ENCODE measurements at regions of chr11 and their contacts with region 1.

Region 1: GRCh38 chr11:118689851-118690552 is 10.6 kb upstream of the TREH start:
- DNase-seq: peak; percentile 90
- H3K4me3 ChIP-seq: peak overlapping the region in 2 of 3 experiments; percentile 22 to 34
- H3K27ac ChIP-seq: peak overlapping the region; percentile 48
- H3K4me1 ChIP-seq: no peaks in the 10 kb centered on the region
- H3K27me3 ChIP-seq: peaks cover 0 to 3% of the 10 kb centered on the region in 2 experiments
- CTCF ChIP-seq: peak; percentile 91 to 97
- POLR2A ChIP-seq: peak; percentile 58

Region 2: GRCh38 chr11:118374729-118375128 is 315.3 kb before region 1 on chr11:
- CTCF ChIA-PET with region 1: no interaction called
- POLR2A ChIA-PET with region 1: no interaction called
- dilution Hi-C with region 1: no loop called
- intact Hi-C with region 1: no loop called
- DNase-seq: no peak
- H3K4me3 ChIP-seq: no peak overlapping the region
- H3K27ac ChIP-seq: no peak overlapping the region
- H3K4me1 ChIP-seq: no peaks in the 10 kb centered on the region
- H3K27me3 ChIP-seq: no peaks in the 10 kb centered on the region
- CTCF ChIP-seq: no peak
- POLR2A ChIP-seq: no peak

Region 3: DNA sequence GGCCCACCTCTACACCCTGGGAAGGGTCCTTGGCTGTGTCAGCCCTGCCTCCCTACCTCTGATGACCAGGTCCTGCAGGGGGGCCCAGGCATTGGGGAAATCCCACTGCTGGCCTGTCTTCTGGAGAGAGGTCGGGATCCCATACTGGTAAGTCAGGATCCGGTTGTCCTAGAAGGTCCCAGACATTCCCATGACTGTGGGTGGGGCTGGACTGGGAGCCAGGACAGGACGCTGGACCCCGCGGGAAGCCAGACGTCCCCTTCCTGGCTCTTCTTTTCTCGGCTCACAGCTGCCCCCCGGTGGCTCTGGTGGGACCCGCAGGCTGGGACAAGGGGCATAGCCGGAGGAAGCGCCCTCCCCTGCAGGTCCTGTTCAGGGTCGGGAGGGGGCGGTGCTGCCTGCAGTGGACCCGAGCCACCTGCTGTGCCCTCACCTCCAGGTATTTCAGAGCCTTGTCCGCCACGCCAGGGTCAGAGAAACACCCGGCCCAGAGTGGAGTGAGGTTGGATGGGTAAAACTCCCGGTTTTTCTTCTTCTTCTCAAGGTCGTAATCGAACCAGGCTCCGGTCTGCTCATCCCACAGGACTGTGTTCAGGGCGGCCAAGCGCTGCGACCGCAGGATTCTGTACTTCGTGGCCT is 30.6 kb before region 1 on chr11:
- CTCF ChIA-PET with region 1: interaction called, 4 read pairs
- POLR2A ChIA-PET with region 1: no interaction called
- dilution Hi-C with region 1: no loop called
- intact Hi-C with region 1: loop called (anchors 1 kb)
- DNase-seq: peak; percentile 86
- H3K4me3 ChIP-seq: no peak overlapping the region
- H3K27ac ChIP-seq: peak overlapping the region; percentile 18
- H3K4me1 ChIP-seq: peaks cover 6% of the 10 kb centered on the region
- H3K27me3 ChIP-seq: peaks cover 0 to 2% of the 10 kb centered on the region in 2 experiments
- CTCF ChIP-seq: peak; percentile 97 to 98
- POLR2A ChIP-seq: peak; percentile 65

Region 4: DNA sequence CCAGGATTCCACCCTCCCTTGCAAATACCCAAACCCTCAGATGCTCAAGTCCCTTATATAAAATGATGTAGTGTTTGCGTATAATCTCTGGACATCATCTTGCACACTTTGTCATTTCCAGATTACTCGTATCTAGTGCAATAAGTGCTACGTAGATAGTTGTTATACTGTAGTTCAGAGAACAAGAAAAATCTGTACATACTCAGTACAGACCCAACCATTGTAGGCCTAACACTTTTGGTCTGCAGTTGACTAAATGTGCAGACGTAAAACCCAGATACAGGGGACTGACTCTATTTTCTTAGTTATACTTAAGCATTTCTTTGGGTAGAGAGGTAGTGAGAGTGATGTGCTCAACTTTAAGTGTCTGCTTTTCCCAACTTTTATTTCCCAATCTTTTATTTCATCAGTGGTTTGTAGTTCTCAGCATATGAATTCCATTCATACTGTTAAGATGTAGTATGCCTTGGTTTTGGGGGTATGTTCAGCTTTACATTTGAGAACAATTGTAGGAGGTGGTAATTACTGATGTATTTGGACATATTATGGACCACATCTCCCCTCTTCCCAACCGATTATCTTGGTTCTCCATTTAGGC is 57.1 kb after region 1 on chr11:
- CTCF ChIA-PET with region 1: interaction called, 9 read pairs
- POLR2A ChIA-PET with region 1: no interaction called
- dilution Hi-C with region 1: no loop called
- intact Hi-C with region 1: loop called (anchors 5 kb)
- DNase-seq: no peak
- H3K4me3 ChIP-seq: no peak overlapping the region
- H3K27ac ChIP-seq: no peak overlapping the region
- H3K4me1 ChIP-seq: no peaks in the 10 kb centered on the region
- H3K27me3 ChIP-seq: no peaks in the 10 kb centered on the region
- CTCF ChIP-seq: no peak
- POLR2A ChIP-seq: no peak

Region 5: DNA sequence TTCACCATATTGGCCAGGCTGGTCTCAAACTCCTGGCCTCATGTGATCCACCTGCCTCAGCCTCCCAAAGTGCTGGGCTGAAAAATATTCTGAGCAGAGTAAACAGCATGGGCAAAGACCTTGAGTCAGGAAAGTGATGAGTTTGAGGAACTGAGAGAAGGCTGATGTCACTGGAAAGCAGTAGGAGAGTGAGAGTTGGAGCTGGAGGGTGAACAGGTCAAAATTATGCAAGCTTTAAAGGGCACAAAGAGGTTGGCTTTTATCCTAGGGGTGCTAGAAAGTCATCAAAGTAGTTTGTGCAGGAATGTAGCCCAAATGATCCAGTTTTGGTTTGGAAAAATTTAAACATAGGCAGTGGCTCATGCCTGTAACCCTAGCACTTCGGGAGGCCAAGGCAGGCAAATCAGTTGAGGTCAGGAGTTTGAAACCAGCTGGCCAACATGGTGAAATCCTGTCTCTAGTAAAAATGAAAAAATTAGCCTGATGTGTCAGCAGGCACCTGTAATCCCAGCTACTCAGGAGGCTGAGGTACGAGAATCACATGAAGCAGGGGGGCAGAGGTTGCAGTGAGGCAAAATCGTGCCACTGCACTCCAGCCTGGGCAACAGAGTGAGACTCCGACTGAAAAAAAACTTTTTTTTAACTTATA is 149.0 kb after region 1 on chr11:
- CTCF ChIA-PET with region 1: no interaction called
- POLR2A ChIA-PET with region 1: no interaction called
- dilution Hi-C with region 1: no loop called
- intact Hi-C with region 1: no loop called
- DNase-seq: no peak
- H3K4me3 ChIP-seq: no peak overlapping the region
- H3K27ac ChIP-seq: no peak overlapping the region
- H3K4me1 ChIP-seq: no peaks in the 10 kb centered on the region
- H3K27me3 ChIP-seq: peaks cover 0 to 6% of the 10 kb centered on the region in 2 experiments
- CTCF ChIP-seq: no peak
- POLR2A ChIP-seq: no peak

Region 6: DNA sequence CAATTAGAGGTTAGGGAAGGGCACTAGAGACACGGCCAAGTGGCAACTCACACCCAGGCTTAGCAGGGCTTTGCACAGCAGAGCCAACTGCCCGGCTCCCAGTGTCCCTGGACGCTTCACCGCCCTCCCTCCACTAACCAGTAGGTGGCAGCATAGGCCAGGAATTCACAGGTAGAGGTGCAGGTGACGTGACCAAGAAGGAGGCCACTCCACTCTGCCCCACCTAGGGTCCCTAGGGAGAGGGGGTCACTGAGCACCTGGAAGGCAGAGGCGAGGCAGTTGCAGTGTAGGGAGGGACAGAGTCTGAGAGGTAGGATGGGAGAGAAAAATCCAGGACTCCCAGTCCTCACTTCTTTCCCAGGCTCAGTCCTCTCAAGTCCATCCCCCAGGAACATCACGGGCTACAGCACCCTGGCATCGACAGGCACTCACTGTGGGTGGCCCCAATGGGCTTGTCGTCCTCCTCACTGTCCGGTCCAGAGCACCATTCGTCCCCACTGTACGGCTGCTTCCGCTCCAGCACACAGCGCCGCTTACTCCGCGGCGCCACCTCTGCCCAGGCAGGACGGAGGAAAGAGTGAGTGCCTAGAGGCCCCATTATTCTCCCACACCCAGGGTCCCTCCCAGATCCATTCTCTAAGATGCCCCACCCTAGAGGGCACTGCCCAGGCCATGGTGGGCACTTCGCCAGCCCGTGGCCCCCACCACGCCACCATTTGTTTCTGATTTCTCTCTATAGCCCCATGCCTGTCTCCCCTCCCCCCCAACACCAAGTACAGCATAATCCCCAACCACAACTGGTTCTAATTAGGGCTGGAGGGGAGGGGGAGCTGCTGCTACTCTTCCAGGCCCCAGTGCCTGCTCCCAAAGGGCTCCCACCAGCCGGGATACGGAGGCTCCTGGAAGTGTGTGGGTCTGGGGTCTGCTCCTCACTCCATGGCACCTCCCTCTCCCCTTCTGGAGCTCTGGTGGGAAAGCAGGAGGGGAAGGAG is 217.3 kb after region 1 on chr11:
- CTCF ChIA-PET with region 1: interaction called, 3 read pairs
- POLR2A ChIA-PET with region 1: no interaction called
- dilution Hi-C with region 1: no loop called
- intact Hi-C with region 1: loop called (anchors 1 kb)
- DNase-seq: peak; percentile 82
- H3K4me3 ChIP-seq: no peak overlapping the region
- H3K27ac ChIP-seq: no peak overlapping the region
- H3K4me1 ChIP-seq: peaks cover 30% of the 10 kb centered on the region
- H3K27me3 ChIP-seq: no peaks in the 10 kb centered on the region
- CTCF ChIP-seq: peak; percentile 84 to 88
- POLR2A ChIP-seq: no peak

Region 7: GRCh38 chr11:118956094-118956846 is 266.3 kb after region 1 on chr11 and contains the start of gene UPK2:
- CTCF ChIA-PET with region 1: interaction called, 45 read pairs
- POLR2A ChIA-PET with region 1: no interaction called
- dilution Hi-C with region 1: no loop called
- intact Hi-C with region 1: loop called (anchors 1 kb)
- DNase-seq: peak; percentile 68
- H3K4me3 ChIP-seq: no peak within 1 kb of the TSS
- H3K27ac ChIP-seq: no peak within 1 kb of the TSS
- H3K4me1 ChIP-seq: no peaks in the 10 kb centered on the region
- H3K27me3 ChIP-seq: peaks cover 3 to 5% of the 10 kb centered on the region in 2 experiments
- CTCF ChIP-seq: peak; percentile 88 to 97
- POLR2A ChIP-seq: no peak
- total RNA-seq, gene UPK2: not detected in 2 replicates